Panc1 (cell line): ENCODE measurements at regions of chr7 and their contacts with region 1.

Region 1: DNA sequence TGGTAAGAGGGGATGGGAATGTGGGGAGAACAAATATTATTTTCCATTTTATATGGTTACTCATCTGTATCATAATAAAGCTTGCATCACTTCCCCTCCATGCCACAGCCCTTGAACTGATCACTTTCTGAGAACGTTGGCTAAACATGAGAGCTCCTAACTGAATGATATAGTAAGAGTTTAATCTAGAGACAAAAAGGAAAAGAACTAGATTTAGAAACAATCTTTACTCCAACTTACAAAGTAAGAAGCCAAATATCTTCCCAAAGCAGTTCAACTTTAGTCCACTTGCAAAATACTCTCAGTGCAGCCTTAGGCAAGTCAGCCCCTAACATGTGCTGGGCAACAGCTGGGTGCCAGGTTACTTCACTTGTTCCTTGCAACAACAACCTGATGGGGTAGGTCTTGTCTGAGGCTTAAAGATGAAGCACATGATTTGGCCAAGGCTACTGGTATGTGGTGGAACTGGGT is 20.3 kb downstream of the SMURF1 start:
- DNase-seq: no peak
- ATAC-seq: no peak
- H3K4me3 ChIP-seq: no peak overlapping the region
- H3K27ac ChIP-seq: peak overlapping the region; percentile 8; the same call in 1 of the 2 replicates
- H3K4me1 ChIP-seq: peaks cover 69% of the 10 kb centered on the region
- H3K27me3 ChIP-seq: no peaks in the 10 kb centered on the region
- CTCF ChIP-seq: no peak

Region 2: GRCh38 chr7:99040104-99040958 is 83.3 kb before region 1 on chr7:
- CTCF ChIA-PET with region 1: no interaction called
- POLR2A ChIA-PET with region 1: no interaction called
- in situ Hi-C with region 1: no loop called
- intact Hi-C with region 1: loop called (anchors 10 kb)
- DNase-seq: peak; percentile 78
- ATAC-seq: peak; percentile 84
- H3K4me3 ChIP-seq: no peak overlapping the region
- H3K27ac ChIP-seq: peak overlapping the region; percentile 72
- H3K4me1 ChIP-seq: peaks cover 24% of the 10 kb centered on the region
- H3K27me3 ChIP-seq: no peaks in the 10 kb centered on the region
- CTCF ChIP-seq: peak; percentile 86

Region 3: GRCh38 chr7:99109108-99110051 is 14.2 kb before region 1 on chr7:
- CTCF ChIA-PET with region 1: no interaction called
- POLR2A ChIA-PET with region 1: interaction called, 12 read pairs
- in situ Hi-C with region 1: no loop called
- intact Hi-C with region 1: no loop called
- DNase-seq: no peak
- ATAC-seq: peak; percentile 65
- H3K4me3 ChIP-seq: 0 out of 4 replicates have a peak overlapping the region, but pooled peaks of 1 of the 2 experiments have one; percentile 2
- H3K27ac ChIP-seq: peak overlapping the region; percentile 74
- H3K4me1 ChIP-seq: peaks cover 85% of the 10 kb centered on the region
- H3K27me3 ChIP-seq: no peaks in the 10 kb centered on the region
- CTCF ChIP-seq: no peak

Region 4: GRCh38 chr7:99410635-99411034 is 287.0 kb after region 1 on chr7:
- CTCF ChIA-PET with region 1: no interaction called
- POLR2A ChIA-PET with region 1: interaction called, 11 read pairs
- in situ Hi-C with region 1: no loop called
- intact Hi-C with region 1: no loop called
- DNase-seq: no peak
- ATAC-seq: no peak
- H3K4me3 ChIP-seq: peak overlapping the region in 1 of 2 experiments; percentile 96; a peak in 2 of 4 replicates
- H3K27ac ChIP-seq: no peak overlapping the region
- H3K4me1 ChIP-seq: peaks cover 19% of the 10 kb centered on the region
- H3K27me3 ChIP-seq: no peaks in the 10 kb centered on the region
- CTCF ChIP-seq: no peak